ENCODE measurements at regions of chr1 and their contacts with region 1.

Region 1: GRCh38 chr1:72186733-72187307 is 95.5 kb downstream of the NEGR1 start:
- DNase-seq: no peak
- ATAC-seq: no peak
- H3K4me3 ChIP-seq: no peak overlapping the region
- H3K27ac ChIP-seq: no peak overlapping the region
- H3K4me1 ChIP-seq: no peaks in the 10 kb centered on the region
- H3K27me3 ChIP-seq: no peaks in the 10 kb centered on the region
- CTCF ChIP-seq: peak; percentile 35

Region 2: GRCh38 chr1:72230746-72231145 is 43.9 kb after region 1 on chr1:
- intact Hi-C with region 1: no loop called
- DNase-seq: no peak
- ATAC-seq: peak in 1 of 4 donors; percentile 45
- H3K4me3 ChIP-seq: no peak overlapping the region
- H3K27ac ChIP-seq: no peak overlapping the region
- H3K4me1 ChIP-seq: no peaks in the 10 kb centered on the region
- H3K27me3 ChIP-seq: no peaks in the 10 kb centered on the region
- CTCF ChIP-seq: no peak

Region 3: GRCh38 chr1:72282271-72283021 is 95.6 kb after region 1 on chr1 and contains the start of gene NEGR1:
- intact Hi-C with region 1: loop called in 1 of 2 experiments (anchors 10 kb)
- DNase-seq: peak; percentile 89 to 92
- ATAC-seq: peak; percentile 80 to 93 (median 88)
- H3K4me3 ChIP-seq: peak within 1 kb of the TSS; percentile 81
- H3K27ac ChIP-seq: peak within 1 kb of the TSS; percentile 75
- H3K4me1 ChIP-seq: no peaks in the 10 kb centered on the region
- H3K27me3 ChIP-seq: no peaks in the 10 kb centered on the region
- CTCF ChIP-seq: no peak
- total RNA-seq, gene NEGR1: 2.2 to 10.2 (median 5.2) TPM